ENCODE measurements at regions of chr19 and their contacts with region 1.

Region 1: GRCh38 chr19:47745010-47745901 is at the start of gene NOP53:
- DNase-seq: peak; percentile 95 to 97
- ATAC-seq: peak; percentile 94
- H3K4me3 ChIP-seq: peak within 1 kb of the TSS; percentile 77 to 99 (median 92)
- H3K27ac ChIP-seq: peak within 1 kb of the TSS; percentile 92 to 99 (median 98)
- H3K4me1 ChIP-seq: peaks cover 22 to 33% of the 10 kb centered on the region in 2 donors
- H3K27me3 ChIP-seq: no peaks in the 10 kb centered on the region
- CTCF ChIP-seq: peak in 1 of 5 experiments; percentile 21
- POLR2A ChIP-seq: peak; percentile 77 to 79
- total RNA-seq, gene NOP53: 141 to 262 (median 150) TPM

Region 2: DNA sequence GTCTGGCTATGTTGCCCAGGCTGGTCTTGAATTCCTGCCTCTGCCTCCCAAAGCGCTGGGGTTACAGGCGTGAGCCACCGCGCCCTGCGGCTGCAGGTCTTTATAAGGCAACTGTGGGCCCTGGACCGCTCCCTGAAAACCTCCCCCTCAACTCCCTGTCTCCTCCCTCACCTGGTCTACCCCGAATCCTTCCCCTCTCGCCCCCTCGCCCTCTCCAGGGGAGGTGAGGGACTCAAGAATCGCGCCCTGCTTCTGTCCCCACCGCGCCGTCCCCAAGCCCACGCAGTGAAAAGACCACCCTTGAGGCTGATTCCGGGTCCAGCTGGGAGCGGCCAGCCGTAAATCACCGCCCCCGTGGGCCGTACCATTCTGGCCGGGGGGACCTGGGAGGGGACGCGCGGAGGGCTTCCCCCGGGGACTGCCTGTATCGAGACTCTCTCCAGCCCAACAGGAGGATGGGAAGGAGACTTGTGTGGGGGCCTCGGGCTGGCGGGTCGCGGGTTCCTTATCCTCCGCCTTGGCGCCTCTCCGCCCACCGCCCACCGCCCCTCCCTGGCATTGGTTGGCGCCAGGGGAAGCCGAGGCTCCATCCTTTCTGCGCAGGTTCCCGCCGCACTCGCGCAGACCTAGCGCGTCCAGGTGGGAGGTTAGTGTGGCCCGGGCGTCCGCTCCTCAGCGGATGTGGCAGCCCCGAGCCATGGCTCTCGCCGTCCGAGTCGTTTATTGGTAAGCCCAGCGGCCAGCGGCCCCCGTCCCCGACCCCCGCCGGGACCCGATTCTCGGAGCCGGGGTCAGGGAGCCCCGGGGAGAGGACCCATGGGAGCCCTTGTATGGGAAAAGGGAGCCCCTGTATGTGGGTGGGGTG is 33.1 kb after region 1 on chr19 and contains the start of gene SELENOW:
- in situ Hi-C with region 1: no loop called
- intact Hi-C with region 1: loop called (anchors 2 kb)
- DNase-seq: peak; percentile 48 to 81
- ATAC-seq: peak; percentile 61 to 68
- H3K4me3 ChIP-seq: peak within 1 kb of the TSS; percentile 74 to 98 (median 90)
- H3K27ac ChIP-seq: peak within 1 kb of the TSS; percentile 93 to 99 (median 95)
- H3K4me1 ChIP-seq: peaks cover 38 to 41% of the 10 kb centered on the region in 2 donors
- H3K27me3 ChIP-seq: no peaks in the 10 kb centered on the region
- CTCF ChIP-seq: peak in 1 of 5 experiments; percentile 19
- POLR2A ChIP-seq: peak; percentile 96 to 98
- total RNA-seq, gene SELENOW: 730 to 1,512 (median 1,402) TPM

Measured in gastrocnemius medialis (tissue), 4 donors.